PC-3 (cell line): ENCODE measurements at regions of chr3 and their contacts with region 1.

Region 1: GRCh38 chr3:139111392-139112229 is 66.9 kb upstream of the PRR23C start:
- DNase-seq: peak; percentile 58
- ATAC-seq: peak; percentile 91
- H3K4me3 ChIP-seq: no peak overlapping the region
- H3K27ac ChIP-seq: no peak overlapping the region
- H3K4me1 ChIP-seq: 0 out of 2 replicates have a peak, but pooled peaks cover under 1% of the 10 kb centered on the region
- H3K27me3 ChIP-seq: no peaks in the 10 kb centered on the region
- CTCF ChIP-seq: peak; percentile 77

Region 2: GRCh38 chr3:139032326-139033002 is 79.1 kb before region 1 on chr3:
- CTCF ChIA-PET with region 1: no interaction called
- POLR2A ChIA-PET with region 1: no interaction called
- intact Hi-C with region 1: no loop called
- DNase-seq: no peak
- ATAC-seq: no peak
- H3K4me3 ChIP-seq: no peak overlapping the region
- H3K27ac ChIP-seq: no peak overlapping the region
- H3K4me1 ChIP-seq: no peaks in the 10 kb centered on the region
- H3K27me3 ChIP-seq: peaks cover 17% of the 10 kb centered on the region; the same call in 1 of the 2 replicates
- CTCF ChIP-seq: no peak

Region 3: DNA sequence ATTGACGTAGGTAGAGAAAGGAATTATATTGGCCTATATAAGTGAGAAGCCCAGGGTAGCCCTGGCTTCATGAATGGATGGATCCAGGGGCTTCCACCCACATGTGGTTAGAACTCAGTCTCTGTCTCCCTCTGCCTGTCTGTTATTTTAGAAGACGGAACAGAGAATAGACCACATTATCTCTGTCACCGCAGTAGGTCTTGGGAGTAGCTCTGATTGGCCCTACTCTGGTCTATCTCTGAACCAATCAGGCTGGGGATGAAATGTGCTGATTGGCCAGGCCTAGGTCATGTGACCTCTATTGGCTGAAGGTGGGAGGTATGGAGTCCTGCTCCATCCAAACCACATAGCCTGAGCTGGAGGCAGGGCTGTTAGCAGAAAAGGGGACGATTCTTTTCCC is 76.0 kb after region 1 on chr3:
- CTCF ChIA-PET with region 1: no interaction called
- POLR2A ChIA-PET with region 1: no interaction called
- intact Hi-C with region 1: no loop called
- DNase-seq: no peak
- ATAC-seq: no peak
- H3K4me3 ChIP-seq: no peak overlapping the region
- H3K27ac ChIP-seq: no peak overlapping the region
- H3K4me1 ChIP-seq: no peaks in the 10 kb centered on the region
- H3K27me3 ChIP-seq: no peaks in the 10 kb centered on the region
- CTCF ChIP-seq: no peak

Region 4: GRCh38 chr3:139202226-139202958 is 90.8 kb after region 1 on chr3:
- CTCF ChIA-PET with region 1: no interaction called
- POLR2A ChIA-PET with region 1: no interaction called
- intact Hi-C with region 1: loop called (anchors 2 kb)
- DNase-seq: peak; percentile 66
- ATAC-seq: peak; percentile 87
- H3K4me3 ChIP-seq: no peak overlapping the region
- H3K27ac ChIP-seq: no peak overlapping the region
- H3K4me1 ChIP-seq: no peaks in the 10 kb centered on the region
- H3K27me3 ChIP-seq: no peaks in the 10 kb centered on the region
- CTCF ChIP-seq: peak; percentile 57

Region 5: DNA sequence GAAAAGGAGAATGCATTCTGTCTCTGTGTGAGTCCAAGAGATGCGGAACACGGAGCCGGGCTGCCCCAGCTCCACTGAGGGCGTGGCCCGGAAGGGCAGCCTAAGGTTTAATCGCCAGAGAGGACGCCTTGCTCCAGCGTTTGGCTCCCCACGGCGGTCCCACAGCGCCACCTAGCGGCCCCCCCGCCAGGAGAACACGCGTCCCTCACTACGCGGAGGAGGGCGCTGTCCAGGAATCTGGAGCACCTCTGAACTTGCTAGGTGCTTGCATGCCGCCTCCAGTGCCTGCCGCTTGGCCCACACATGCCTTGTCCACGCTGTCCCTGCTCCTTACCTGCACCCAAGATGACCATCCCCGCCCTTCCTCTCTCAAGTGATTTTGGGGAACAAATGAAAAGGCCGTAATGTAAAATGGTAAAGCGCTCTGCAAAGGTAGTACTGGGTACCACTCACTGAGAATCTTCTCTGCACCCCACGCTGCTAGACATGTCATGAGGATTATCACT is 217.8 kb after region 1 on chr3:
- CTCF ChIA-PET with region 1: interaction called, 15 read pairs
- POLR2A ChIA-PET with region 1: no interaction called
- intact Hi-C with region 1: loop called (anchors 2 kb)
- DNase-seq: peak; percentile 85
- ATAC-seq: peak; percentile 97
- H3K4me3 ChIP-seq: no peak overlapping the region
- H3K27ac ChIP-seq: no peak overlapping the region
- H3K4me1 ChIP-seq: peaks cover 4% of the 10 kb centered on the region; the same call in 1 of the 2 replicates
- H3K27me3 ChIP-seq: peaks cover 22% of the 10 kb centered on the region
- CTCF ChIP-seq: peak; percentile 97

Region 6: GRCh38 chr3:139353920-139354556 is 242.4 kb after region 1 on chr3:
- CTCF ChIA-PET with region 1: interaction called, 10 read pairs
- POLR2A ChIA-PET with region 1: no interaction called
- intact Hi-C with region 1: no loop called
- DNase-seq: peak; percentile 70
- ATAC-seq: peak; percentile 95
- H3K4me3 ChIP-seq: no peak overlapping the region
- H3K27ac ChIP-seq: no peak overlapping the region
- H3K4me1 ChIP-seq: no peaks in the 10 kb centered on the region
- H3K27me3 ChIP-seq: no peaks in the 10 kb centered on the region
- CTCF ChIP-seq: peak; percentile 81